Endothelial cell of umbilical vein (primary cell): ENCODE measurements at regions of chr6 and their contacts with region 1.

Region 1: DNA sequence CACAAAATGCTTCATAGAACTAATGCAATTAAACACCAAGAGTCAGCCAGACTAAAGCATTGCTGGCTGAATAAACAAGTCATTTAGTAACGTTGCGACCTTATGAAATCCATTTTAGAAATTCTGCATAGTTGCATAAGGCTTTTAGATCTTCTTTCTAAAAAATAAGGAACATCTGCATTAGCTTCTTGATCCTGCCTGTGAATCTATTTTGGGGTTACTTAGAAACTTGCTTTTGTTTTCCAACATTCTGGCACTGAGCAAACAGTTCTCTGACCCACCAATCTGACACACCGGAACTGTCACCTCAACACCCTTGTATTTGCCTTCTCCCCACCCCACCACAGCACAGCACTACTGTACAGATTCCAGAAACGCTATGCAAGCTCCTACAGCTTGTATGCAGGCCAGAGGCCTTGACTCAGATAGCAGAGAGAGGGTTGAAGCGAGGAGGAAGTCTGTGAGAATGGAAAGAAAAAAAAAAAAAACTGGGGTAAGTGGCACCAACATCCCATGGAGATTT is 55.0 kb downstream of the KIF13A start:
- DNase-seq: peak; percentile 58
- H3K4me3 ChIP-seq: no peak overlapping the region
- H3K27ac ChIP-seq: peak overlapping the region; percentile 96
- H3K4me1 ChIP-seq: peaks cover 50% of the 10 kb centered on the region
- H3K27me3 ChIP-seq: no peaks in the 10 kb centered on the region
- CTCF ChIP-seq: no peak
- POLR2A ChIP-seq: no peak

Region 2: GRCh38 chr6:17820055-17820454 is 112.3 kb before region 1 on chr6:
- CTCF ChIA-PET with region 1: interaction called, 3 read pairs
- POLR2A ChIA-PET with region 1: interaction called, 3 read pairs
- dilution Hi-C with region 1: no loop called
- intact Hi-C with region 1: loop called (anchors 5 kb)
- DNase-seq: no peak
- H3K4me3 ChIP-seq: no peak overlapping the region
- H3K27ac ChIP-seq: no peak overlapping the region
- H3K4me1 ChIP-seq: no peaks in the 10 kb centered on the region
- H3K27me3 ChIP-seq: no peaks in the 10 kb centered on the region
- CTCF ChIP-seq: no peak
- POLR2A ChIP-seq: no peak

Region 3: DNA sequence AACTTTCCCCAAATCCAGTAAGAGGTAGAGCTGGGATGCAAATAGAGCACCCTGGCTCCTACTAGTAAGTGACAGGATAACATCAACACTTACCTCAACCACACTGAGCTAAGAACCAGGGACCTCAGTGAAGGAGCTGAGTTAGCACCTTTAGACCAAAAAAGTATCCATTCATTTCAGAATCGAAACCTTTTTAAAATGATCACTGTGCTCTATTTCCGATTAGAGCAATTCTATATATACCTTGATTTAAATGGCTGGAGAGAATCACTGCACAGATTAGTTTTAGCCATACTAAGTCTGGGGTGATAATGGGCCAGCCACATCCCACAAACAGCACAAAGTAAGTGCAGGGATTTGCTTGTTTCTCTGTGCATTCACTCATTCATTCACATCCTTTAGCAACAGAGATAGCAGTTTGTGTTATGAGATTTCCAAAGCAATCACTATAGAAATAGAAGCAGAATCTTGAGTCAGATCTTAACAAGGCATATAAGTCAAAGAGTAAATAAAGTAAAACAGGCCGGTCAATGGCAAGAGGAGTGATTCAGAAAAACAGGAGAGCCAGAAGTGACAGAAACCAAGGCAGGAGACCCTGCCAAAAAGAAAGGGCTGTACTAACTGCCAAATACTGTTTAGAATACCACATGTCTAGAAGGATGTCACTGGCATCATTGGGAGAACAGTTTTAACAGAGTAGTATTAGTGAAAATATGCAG is 81.2 kb before region 1 on chr6:
- CTCF ChIA-PET with region 1: no interaction called
- POLR2A ChIA-PET with region 1: no interaction called
- dilution Hi-C with region 1: no loop called
- intact Hi-C with region 1: loop called (anchors 1 kb)
- DNase-seq: peak; percentile 65
- H3K4me3 ChIP-seq: peak overlapping the region in 1 of 3 experiments; percentile 51
- H3K27ac ChIP-seq: peak overlapping the region; percentile 93
- H3K4me1 ChIP-seq: peaks cover 49% of the 10 kb centered on the region
- H3K27me3 ChIP-seq: no peaks in the 10 kb centered on the region
- CTCF ChIP-seq: no peak
- POLR2A ChIP-seq: no peak

Region 4: DNA sequence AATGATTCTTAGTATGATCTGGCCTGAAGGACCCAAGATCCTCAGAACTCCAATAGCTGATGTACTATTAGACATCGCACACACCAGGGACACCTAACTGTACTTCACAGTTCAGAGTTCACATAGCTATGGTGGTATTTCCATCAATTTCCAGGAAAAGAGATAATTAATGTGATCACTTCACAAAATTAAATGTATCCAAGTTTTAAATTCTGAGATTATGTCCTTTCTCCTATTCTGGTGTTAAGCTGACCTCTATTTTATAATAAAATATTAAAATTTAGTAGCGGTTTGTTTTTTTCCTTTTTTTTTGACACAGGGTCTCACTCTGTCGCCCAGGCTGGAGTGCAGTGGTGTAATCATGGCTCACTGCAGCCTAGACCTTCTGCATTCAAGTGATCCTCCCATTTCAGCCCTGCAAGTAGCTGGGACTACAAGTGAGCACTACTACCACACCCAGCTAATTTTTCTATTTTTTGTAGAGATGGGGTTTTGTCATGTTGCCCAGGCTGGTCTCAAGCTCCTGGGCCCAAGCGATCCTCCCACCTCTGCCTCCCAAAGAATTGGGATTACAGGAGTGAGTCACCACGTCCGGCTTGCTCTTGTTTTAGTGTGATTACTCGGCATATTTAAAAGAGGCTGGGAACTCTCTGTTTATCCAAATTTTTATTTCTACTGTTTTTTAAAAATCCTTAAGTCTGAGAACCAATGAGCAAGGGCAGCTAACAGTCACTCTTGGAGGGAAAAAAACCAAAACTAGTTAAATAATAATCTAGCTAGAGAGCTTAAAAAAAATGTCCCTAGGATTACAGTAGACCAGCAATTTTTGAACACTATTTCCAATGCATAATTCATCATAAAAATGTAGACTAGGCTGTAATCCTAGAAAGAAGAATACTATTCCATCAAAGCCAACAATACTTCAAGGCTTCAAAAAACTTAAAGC is 39.0 kb after region 1 on chr6:
- CTCF ChIA-PET with region 1: interaction called, 4 read pairs
- POLR2A ChIA-PET with region 1: interaction called, 10 read pairs
- dilution Hi-C with region 1: no loop called
- intact Hi-C with region 1: loop called (anchors 2 kb)
- DNase-seq: peak; percentile 41
- H3K4me3 ChIP-seq: no peak overlapping the region
- H3K27ac ChIP-seq: peak overlapping the region; percentile 26
- H3K4me1 ChIP-seq: peaks cover 33% of the 10 kb centered on the region
- H3K27me3 ChIP-seq: no peaks in the 10 kb centered on the region
- CTCF ChIP-seq: no peak
- POLR2A ChIP-seq: no peak

Region 5: GRCh38 chr6:18042536-18043145 is 110.2 kb after region 1 on chr6:
- CTCF ChIA-PET with region 1: no interaction called
- POLR2A ChIA-PET with region 1: no interaction called
- dilution Hi-C with region 1: no loop called
- intact Hi-C with region 1: loop called (anchors 2 kb)
- DNase-seq: no peak
- H3K4me3 ChIP-seq: no peak overlapping the region
- H3K27ac ChIP-seq: no peak overlapping the region
- H3K4me1 ChIP-seq: peaks cover 3% of the 10 kb centered on the region
- H3K27me3 ChIP-seq: no peaks in the 10 kb centered on the region
- CTCF ChIP-seq: no peak
- POLR2A ChIP-seq: no peak

Region 6: GRCh38 chr6:18893540-18894269 is 961.3 kb after region 1 on chr6:
- CTCF ChIA-PET with region 1: no interaction called
- POLR2A ChIA-PET with region 1: no interaction called
- dilution Hi-C with region 1: no loop called
- intact Hi-C with region 1: no loop called
- DNase-seq: no peak
- H3K4me3 ChIP-seq: no peak overlapping the region
- H3K27ac ChIP-seq: no peak overlapping the region
- H3K4me1 ChIP-seq: no peaks in the 10 kb centered on the region
- H3K27me3 ChIP-seq: no peaks in the 10 kb centered on the region
- CTCF ChIP-seq: no peak
- POLR2A ChIP-seq: no peak